ENCODE measurements at regions of chr5 and their contacts with region 1.

Region 1: GRCh38 chr5:139968547-139969261 is 74.4 kb downstream of the NRG2 start:
- DNase-seq: peak; percentile 92
- H3K4me3 ChIP-seq: no peak overlapping the region
- H3K27ac ChIP-seq: no peak overlapping the region
- H3K4me1 ChIP-seq: peaks cover 15 to 19% (median 16%) of the 10 kb centered on the region in 4 donors
- H3K27me3 ChIP-seq: no peaks in the 10 kb centered on the region
- CTCF ChIP-seq: peak in 2 of 3 experiments; percentile 99
- EP300 ChIP-seq: no peak
- POLR2A ChIP-seq: no peak

Region 2: GRCh38 chr5:139787568-139788293 is 181.0 kb before region 1 on chr5:
- intact Hi-C with region 1: loop called (anchors 2 kb)
- DNase-seq: peak; percentile 97
- H3K4me3 ChIP-seq: peak overlapping the region; percentile 60 to 72 (median 66)
- H3K27ac ChIP-seq: peak overlapping the region; percentile 67 to 74 (median 72)
- H3K4me1 ChIP-seq: peaks cover 8 to 18% (median 17%) of the 10 kb centered on the region in 4 donors
- H3K27me3 ChIP-seq: peaks cover 0 to 16% (median 0%) of the 10 kb centered on the region in 4 donors
- CTCF ChIP-seq: peak; percentile 83 to 99 (median 92)
- EP300 ChIP-seq: no peak
- POLR2A ChIP-seq: no peak

Region 3: DNA sequence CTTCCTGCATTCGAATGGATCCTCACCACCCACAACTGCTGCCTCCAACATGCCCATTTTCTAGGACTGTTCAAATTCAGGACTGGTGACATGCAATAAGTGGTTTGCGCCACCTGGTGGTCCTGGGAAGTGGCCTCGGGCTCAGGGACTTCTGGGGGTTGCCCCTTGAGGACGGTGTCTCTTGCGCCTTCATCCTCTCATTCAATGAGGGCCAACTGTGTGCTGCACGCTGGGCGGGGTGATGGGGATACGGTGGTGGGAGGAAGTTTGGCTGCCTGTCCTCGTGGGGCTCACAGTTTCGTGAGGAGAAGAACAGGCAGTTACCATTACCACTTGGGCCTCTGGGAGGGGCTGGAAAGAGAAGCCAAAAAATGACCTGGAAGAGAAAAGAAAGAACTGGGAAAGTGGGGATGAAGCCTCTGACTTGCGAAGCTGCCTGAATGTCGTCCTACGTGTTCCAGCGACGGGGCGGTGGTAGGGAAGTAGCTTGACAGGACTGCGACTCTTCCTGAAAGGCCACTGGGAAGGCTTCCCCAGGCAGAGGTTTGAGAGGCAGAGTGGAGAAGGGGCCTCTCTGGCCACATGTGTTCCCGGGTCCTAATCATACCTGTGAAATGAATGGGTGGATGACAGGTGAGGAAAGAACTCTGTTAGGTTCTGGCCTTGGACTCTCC is 124.1 kb before region 1 on chr5:
- intact Hi-C with region 1: loop called (anchors 5 kb)
- DNase-seq: no peak
- H3K4me3 ChIP-seq: no peak overlapping the region
- H3K27ac ChIP-seq: no peak overlapping the region
- H3K4me1 ChIP-seq: peaks cover 5 to 25% (median 14%) of the 10 kb centered on the region in 4 donors
- H3K27me3 ChIP-seq: peaks cover 0 to 9% (median 0%) of the 10 kb centered on the region in 4 donors
- CTCF ChIP-seq: peak; percentile 60 to 71 (median 66)
- EP300 ChIP-seq: no peak
- POLR2A ChIP-seq: no peak

Region 4: GRCh38 chr5:139869042-139869790 is 99.5 kb before region 1 on chr5:
- intact Hi-C with region 1: loop called (anchors 5 kb)
- DNase-seq: no peak
- H3K4me3 ChIP-seq: no peak overlapping the region
- H3K27ac ChIP-seq: no peak overlapping the region
- H3K4me1 ChIP-seq: peaks cover 0 to 2% (median under 1%) of the 10 kb centered on the region in 4 donors
- H3K27me3 ChIP-seq: no peaks in the 10 kb centered on the region
- CTCF ChIP-seq: no peak
- EP300 ChIP-seq: no peak
- POLR2A ChIP-seq: no peak

Region 5: DNA sequence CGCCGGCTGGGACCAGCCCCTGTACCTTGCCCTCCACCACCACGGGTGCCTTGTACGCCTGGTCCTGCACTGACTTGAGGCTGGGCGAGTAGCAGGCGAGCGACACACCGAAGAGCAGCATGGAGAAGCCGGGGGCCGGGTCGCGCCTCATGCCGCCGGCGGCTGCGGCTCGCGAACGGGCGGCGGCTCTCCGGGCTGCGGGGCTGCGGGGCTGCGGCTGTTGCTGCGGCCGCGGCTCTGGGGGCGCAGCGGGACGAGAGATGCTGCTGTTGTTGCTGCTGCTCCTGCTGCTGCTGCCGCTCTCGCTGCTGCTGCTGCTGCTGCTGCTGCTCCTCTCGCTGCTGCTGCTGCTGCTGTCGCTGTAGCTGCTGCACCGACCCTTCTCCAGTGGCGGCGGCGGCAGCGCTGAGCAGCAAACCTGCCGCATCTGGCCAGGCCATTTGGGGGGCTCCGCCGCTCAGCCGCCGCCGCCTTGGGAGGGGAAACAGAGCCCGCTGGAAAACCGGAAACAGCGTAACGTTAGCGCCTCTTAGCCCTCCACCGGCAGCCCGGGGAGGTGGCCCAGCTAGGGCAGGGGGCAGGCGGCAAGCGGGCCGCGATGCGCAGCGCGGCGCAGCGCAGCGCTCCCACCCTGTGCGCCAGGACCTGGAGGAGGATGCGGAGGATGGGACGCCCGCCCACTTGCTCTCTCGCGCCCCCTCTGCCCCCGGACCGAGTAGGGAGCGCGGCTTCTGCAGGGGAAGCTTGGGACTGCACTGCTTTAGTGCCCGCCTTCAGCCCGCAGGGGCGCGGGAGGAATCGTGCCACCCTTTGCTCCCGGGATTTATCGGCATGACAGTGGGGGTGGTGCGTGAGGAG is 74.2 kb after region 1 on chr5 and contains the start of gene NRG2:
- intact Hi-C with region 1: loop called (anchors 2 kb)
- DNase-seq: no peak
- H3K4me3 ChIP-seq: peak within 1 kb of the TSS; percentile 68 to 84 (median 80)
- H3K27ac ChIP-seq: peak within 1 kb of the TSS; percentile 76 to 82 (median 80)
- H3K4me1 ChIP-seq: peaks cover 46 to 56% (median 53%) of the 10 kb centered on the region in 4 donors
- H3K27me3 ChIP-seq: no peaks in the 10 kb centered on the region
- CTCF ChIP-seq: peak; percentile 50 to 70 (median 56)
- EP300 ChIP-seq: no peak
- POLR2A ChIP-seq: no peak
- total RNA-seq, gene NRG2: 2.8 to 5.0 (median 4.1) TPM

Measured in esophagus muscularis mucosa (tissue), 4 donors.